Activated CD8-positive, alpha-beta T cell treated with anti-CD3 and anti-CD28 coated beads for 36 hours (primary cell): ENCODE measurements at regions of chr5 and their contacts with region 1.

Region 1: GRCh38 chr5:36944607-36945225 is 68.1 kb downstream of the NIPBL start:
- DNase-seq: no peak
- ATAC-seq: no peak
- H3K4me3 Mint-ChIP-seq: no peak overlapping the region
- H3K27ac Mint-ChIP-seq: no peak overlapping the region
- H3K4me1 Mint-ChIP-seq: peaks cover 55% of the 10 kb centered on the region
- H3K27me3 Mint-ChIP-seq: no peaks in the 10 kb centered on the region
- CTCF ChIP-seq: peak; percentile 66

Region 2: DNA sequence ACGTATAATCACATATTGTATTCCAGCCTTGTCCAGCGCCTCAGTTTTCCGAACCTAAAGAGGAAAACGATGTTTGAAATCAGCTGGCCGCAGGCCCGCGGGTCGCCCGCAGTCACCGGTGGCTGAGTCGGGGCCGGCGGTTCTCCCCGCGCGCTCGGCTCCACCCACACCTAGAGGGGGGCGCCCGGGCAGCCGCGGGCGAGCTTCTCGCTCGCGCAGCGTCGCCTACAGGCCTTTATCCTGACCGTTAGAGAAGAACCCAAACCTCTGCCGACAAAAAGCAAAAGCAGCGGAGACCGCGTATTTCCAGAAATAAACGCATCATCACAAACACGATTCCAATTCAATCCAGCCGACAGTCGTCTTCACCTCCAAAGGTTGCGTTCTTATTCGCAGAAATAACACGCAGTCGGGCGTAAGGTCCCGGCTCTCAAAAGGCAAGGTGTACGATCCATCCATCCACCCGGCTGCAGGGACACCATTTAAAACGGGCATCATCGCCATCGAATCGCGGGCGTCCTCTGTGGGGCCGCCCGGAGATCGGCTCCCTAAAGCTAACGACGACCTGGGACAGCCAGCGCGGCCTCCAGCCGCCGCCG is 68.8 kb before region 1 on chr5:
- CTCF ChIA-PET with region 1: interaction called, 30 read pairs
- POLR2A ChIA-PET with region 1: interaction called, 3 read pairs
- intact Hi-C with region 1: loop called (anchors 2 kb)
- DNase-seq: peak; percentile 76
- ATAC-seq: peak; percentile 48
- H3K4me3 Mint-ChIP-seq: peak overlapping the region; percentile 90
- H3K27ac Mint-ChIP-seq: peak overlapping the region; percentile 89
- H3K4me1 Mint-ChIP-seq: peaks cover 32% of the 10 kb centered on the region
- H3K27me3 Mint-ChIP-seq: no peaks in the 10 kb centered on the region
- CTCF ChIP-seq: peak; percentile 25

Region 3: DNA sequence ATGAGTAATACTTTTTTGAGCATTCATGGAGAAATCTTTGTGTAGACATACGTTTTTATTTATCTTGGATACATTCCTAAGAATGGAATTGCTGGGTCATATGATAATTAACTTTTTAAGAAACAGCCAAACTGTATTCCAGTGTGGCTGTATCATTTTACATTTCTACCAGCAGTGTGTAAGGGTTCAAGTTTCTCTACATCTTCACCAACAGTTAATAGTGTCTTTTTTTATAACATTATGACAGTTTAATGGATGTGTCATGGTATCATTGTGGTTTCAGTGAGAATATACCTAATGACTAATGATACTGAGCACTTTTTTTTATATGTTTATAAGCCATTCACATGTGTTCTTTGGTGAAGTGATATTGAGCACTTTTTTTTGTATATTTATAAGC is 15.8 kb before region 1 on chr5:
- CTCF ChIA-PET with region 1: no interaction called
- POLR2A ChIA-PET with region 1: no interaction called
- intact Hi-C with region 1: no loop called
- DNase-seq: no peak
- ATAC-seq: peak; percentile 85
- H3K4me3 Mint-ChIP-seq: no peak overlapping the region
- H3K27ac Mint-ChIP-seq: peak overlapping the region; percentile 34
- H3K4me1 Mint-ChIP-seq: peaks cover 60% of the 10 kb centered on the region
- H3K27me3 Mint-ChIP-seq: no peaks in the 10 kb centered on the region
- CTCF ChIP-seq: no peak